Activated T-helper 1 cell treated with anti-CD3 and anti-CD28 coated beads, Interleukin-12 subunit alpha, Interleukin-12 subunit beta, Interleukin-2, Interleukin-4 antibody, amounts not matched to agents 30 ng/mL and 10 ng/mL and 1 ng/mL, durations not matched to agents 14 hours and 24 hours and 36 hours (primary cell): ENCODE measurements at regions of chr4 and their contacts with region 1.

Region 1: DNA sequence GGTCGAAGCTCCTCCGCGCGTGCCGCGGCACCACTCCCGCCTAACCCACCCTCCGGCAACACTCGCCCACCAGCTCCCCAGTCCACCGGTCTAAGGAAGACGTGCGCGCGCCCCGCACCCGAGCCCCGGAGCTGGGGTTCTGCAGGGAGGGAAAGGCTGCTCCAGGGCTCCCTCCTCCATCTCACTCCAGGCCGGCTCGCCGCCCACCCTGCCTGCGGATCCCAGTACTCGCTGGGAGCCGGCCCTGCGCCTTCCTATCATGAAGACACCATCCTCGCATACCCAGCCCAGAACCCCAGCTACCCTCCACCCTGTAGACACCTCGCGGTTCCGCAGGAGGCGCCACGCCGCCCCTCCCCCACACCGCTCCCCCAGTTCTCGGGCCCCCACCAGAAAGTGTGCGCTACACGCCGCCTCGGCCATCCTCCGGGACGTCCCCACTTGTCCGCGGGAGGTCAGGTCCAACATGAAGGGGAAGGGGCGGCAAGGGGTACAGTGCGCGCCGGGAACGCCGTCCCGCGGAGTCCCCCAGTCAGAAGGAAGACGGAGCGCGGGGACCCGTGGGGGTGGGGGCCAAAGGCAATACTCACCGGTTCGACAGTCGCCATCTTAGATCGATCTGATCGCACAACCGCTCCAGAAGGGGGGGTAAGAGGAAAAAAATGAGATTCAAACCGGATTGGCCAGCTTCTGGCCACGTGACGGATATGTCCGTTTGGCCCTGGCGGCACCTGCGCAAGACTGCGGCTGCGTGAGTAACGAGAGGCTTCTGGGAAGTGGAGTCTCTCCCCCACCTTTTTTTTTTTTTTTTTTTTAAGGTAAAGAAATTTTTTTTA is at the start of gene EIF4E:
- DNase-seq: peak; percentile 96
- H3K4me3 Mint-ChIP-seq: peak within 1 kb of the TSS; percentile 98
- H3K27ac Mint-ChIP-seq: peak within 1 kb of the TSS; percentile 100
- H3K4me1 Mint-ChIP-seq: peaks cover 46% of the 10 kb centered on the region
- H3K27me3 Mint-ChIP-seq: no peaks in the 10 kb centered on the region
- total RNA-seq, gene EIF4E: 137 and 147 TPM in 2 replicates

Region 2: GRCh38 chr4:98260579-98261290 is 668.0 kb before region 1 on chr4:
- intact Hi-C with region 1: loop called (anchors 1 kb)
- DNase-seq: peak; percentile 89
- H3K4me3 Mint-ChIP-seq: peak overlapping the region; percentile 96
- H3K27ac Mint-ChIP-seq: peak overlapping the region; percentile 97
- H3K4me1 Mint-ChIP-seq: peaks cover 55% of the 10 kb centered on the region
- H3K27me3 Mint-ChIP-seq: no peaks in the 10 kb centered on the region

Region 3: GRCh38 chr4:98482847-98483806 is 445.6 kb before region 1 on chr4:
- intact Hi-C with region 1: loop called (anchors 1 kb)
- DNase-seq: peak; percentile 40
- H3K4me3 Mint-ChIP-seq: peak overlapping the region; percentile 72
- H3K27ac Mint-ChIP-seq: peak overlapping the region; percentile 98
- H3K4me1 Mint-ChIP-seq: peaks cover 92% of the 10 kb centered on the region
- H3K27me3 Mint-ChIP-seq: no peaks in the 10 kb centered on the region

Region 4: DNA sequence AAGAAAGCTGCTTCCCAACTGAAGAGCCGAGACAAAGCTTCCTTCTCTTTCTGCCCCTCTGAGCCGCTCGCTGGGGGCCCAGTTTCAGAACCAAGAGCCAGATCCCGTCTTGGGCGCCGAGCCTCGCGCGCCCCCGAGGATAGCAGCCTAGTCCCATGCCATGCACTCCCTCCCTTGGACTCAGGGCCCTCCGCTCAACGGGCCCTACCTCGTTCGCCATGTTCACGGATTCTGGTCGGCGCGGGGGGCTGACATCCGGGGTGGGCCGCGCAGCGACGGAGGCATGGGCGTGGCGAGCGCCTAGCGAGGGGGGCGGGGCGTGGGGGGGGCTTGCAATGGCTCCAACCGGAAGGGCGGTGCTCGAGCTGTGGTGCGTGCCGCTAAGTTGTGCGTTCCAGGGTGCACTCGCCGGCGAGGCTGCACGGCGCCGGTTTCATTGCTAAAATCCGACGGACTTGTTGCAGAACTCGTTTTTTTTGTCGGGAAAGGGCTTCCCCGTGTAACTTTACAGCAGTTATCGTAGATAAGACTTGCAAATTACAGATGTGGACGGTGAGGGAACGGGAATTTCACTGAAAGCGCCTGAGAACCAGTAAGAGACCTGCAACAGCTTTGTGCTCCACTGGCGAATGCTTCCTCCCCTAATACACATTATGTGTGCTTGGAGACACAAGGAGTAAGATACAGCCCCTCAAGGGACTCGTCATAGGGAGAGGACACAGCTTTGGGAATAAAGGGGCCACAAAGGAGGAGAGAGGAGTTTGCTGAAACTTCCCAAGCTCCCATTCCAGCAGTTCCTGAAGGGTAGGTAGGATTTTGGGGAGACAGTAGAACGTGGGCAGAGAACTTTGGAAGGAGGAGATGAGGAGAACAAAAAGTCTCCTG is 160.0 kb after region 1 on chr4 and contains the start of gene ADH5:
- intact Hi-C with region 1: loop called (anchors 1 kb)
- DNase-seq: peak; percentile 77
- H3K4me3 Mint-ChIP-seq: peak within 1 kb of the TSS; percentile 98
- H3K27ac Mint-ChIP-seq: peak within 1 kb of the TSS; percentile 98
- H3K4me1 Mint-ChIP-seq: peaks cover 50% of the 10 kb centered on the region
- H3K27me3 Mint-ChIP-seq: peaks cover 2% of the 10 kb centered on the region
- total RNA-seq, gene ADH5: 68.8 and 74.9 TPM in 2 replicates

Region 5: GRCh38 chr4:99563310-99564186 is 634.8 kb after region 1 on chr4 and contains the start of gene TRMT10A:
- intact Hi-C with region 1: loop called (anchors 2 kb)
- DNase-seq: peak; percentile 92
- H3K4me3 Mint-ChIP-seq: peak within 1 kb of the TSS; percentile 89
- H3K27ac Mint-ChIP-seq: peak within 1 kb of the TSS; percentile 96
- H3K4me1 Mint-ChIP-seq: peaks cover 25% of the 10 kb centered on the region
- H3K27me3 Mint-ChIP-seq: peaks cover 11% of the 10 kb centered on the region
- total RNA-seq, gene TRMT10A: 7.3 TPM in 2 replicates